Naive thymus-derived CD8-positive, alpha-beta T cell (primary cell): ENCODE measurements at regions of chr10 and their contacts with region 1.

Region 1: GRCh38 chr10:72273410-72274212 is at the start of gene DDIT4:
- DNase-seq: peak; percentile 93 to 98 (median 97)
- ATAC-seq: peak; percentile 92 to 93
- H3K4me3 Mint-ChIP-seq: peak within 1 kb of the TSS; percentile 94 to 100 (median 98)
- H3K27ac Mint-ChIP-seq: peak within 1 kb of the TSS; percentile 89 to 99 (median 96)
- H3K4me1 Mint-ChIP-seq: peaks cover 28 to 61% (median 55%) of the 10 kb centered on the region in 4 donors
- H3K27me3 Mint-ChIP-seq: no peaks in the 10 kb centered on the region
- polyA plus RNA-seq, gene DDIT4: 68.0 to 190 (median 189) TPM

Region 2: GRCh38 chr10:72248468-72249151 is 25.0 kb before region 1 on chr10:
- POLR2A ChIA-PET with region 1: interaction called, 83 read pairs
- DNase-seq: peak; percentile 46 to 92 (median 81)
- ATAC-seq: peak; percentile 82 to 86
- H3K4me3 Mint-ChIP-seq: peak overlapping the region; percentile 70 to 91 (median 86)
- H3K27ac Mint-ChIP-seq: peak overlapping the region; percentile 93 to 99 (median 98)
- H3K4me1 Mint-ChIP-seq: peaks cover 49 to 95% (median 90%) of the 10 kb centered on the region in 4 donors
- H3K27me3 Mint-ChIP-seq: no peaks in the 10 kb centered on the region

Region 3: GRCh38 chr10:72260588-72261322 is 12.9 kb before region 1 on chr10:
- POLR2A ChIA-PET with region 1: interaction called, 69 read pairs
- DNase-seq: peak; percentile 62 to 86 (median 72)
- ATAC-seq: peak; percentile 72 to 75
- H3K4me3 Mint-ChIP-seq: peak overlapping the region; percentile 82 to 94 (median 89)
- H3K27ac Mint-ChIP-seq: peak overlapping the region; percentile 87 to 99 (median 94)
- H3K4me1 Mint-ChIP-seq: peaks cover 37 to 76% (median 75%) of the 10 kb centered on the region in 4 donors
- H3K27me3 Mint-ChIP-seq: no peaks in the 10 kb centered on the region

Region 4: DNA sequence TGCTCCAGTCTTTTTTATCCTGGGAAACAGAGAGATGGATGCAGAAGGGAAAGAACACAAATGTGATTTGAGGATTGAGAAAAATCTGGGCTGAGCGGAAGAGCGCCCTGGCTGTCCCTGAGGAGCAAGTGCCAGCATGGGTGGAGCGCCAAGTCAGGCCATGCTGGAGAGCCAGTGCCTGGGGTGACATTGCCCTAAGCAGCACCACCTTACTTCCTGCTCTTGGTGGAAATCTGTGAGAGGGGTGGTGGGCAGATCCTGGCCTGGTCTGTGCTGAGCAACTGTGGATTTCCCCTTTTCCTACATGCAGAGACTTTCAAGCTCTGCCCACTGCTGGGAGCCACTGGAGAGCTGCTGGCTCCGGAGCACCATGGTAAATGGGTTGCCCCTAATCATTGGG is 37.0 kb after region 1 on chr10:
- POLR2A ChIA-PET with region 1: interaction called, 162 read pairs
- DNase-seq: no peak
- ATAC-seq: peak in 1 of 2 donors; percentile 33
- H3K4me3 Mint-ChIP-seq: peak overlapping the region in 4 of 10 donors; percentile 36 to 74 (median 44)
- H3K27ac Mint-ChIP-seq: peak overlapping the region in 6 of 10 donors; percentile 4 to 95 (median 47)
- H3K4me1 Mint-ChIP-seq: peaks cover 35 to 80% (median 63%) of the 10 kb centered on the region in 4 donors
- H3K27me3 Mint-ChIP-seq: no peaks in the 10 kb centered on the region

Region 5: DNA sequence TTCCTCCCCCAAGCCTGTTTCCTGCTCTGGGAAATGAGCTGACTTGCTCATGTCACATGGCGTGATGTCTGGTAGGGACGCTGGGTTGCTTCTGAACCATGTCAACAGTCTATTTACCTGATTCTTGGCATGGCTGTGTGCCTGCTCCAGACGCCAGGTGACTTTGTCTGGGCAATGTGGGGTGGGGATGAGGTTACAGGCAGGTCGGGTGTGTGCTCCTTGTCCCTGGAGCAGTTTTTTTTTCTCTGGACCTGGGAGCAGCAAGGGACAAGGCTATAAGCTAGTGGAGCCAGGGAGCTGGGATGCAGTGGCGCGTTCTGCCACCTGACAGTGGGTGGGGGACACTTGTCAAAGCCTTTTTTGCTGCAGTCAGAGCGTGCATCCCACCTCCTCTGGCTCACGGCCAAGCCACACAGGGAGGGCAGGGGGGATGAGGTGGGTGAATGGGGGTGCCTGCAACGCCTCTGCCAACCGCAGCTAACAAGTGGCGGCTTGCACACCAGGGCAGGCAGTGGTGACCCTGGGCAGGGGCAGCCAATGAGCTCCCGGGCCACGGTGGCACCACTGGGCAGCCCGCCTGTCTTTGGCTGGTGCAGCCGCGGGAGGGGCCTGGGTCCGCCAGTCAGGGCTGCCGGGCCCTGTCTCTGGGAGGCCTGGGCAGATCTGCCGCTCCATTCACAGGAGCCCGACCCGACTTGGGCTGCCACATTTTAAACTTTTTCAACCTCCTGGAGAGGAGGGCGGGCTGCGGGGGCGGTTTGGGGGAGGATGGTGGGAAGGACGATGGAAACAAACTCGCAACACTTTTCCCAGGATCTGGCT is 58.2 kb after region 1 on chr10:
- POLR2A ChIA-PET with region 1: interaction called, 120 read pairs
- DNase-seq: peak; percentile 82 to 99 (median 96)
- ATAC-seq: peak; percentile 74 to 77
- H3K4me3 Mint-ChIP-seq: peak overlapping the region; percentile 72 to 90 (median 84)
- H3K27ac Mint-ChIP-seq: peak overlapping the region; percentile 92 to 99 (median 98)
- H3K4me1 Mint-ChIP-seq: peaks cover 39 to 97% (median 93%) of the 10 kb centered on the region in 4 donors
- H3K27me3 Mint-ChIP-seq: no peaks in the 10 kb centered on the region